ENCODE measurements at regions of chr10 and their contacts with region 1.

Region 1: GRCh38 chr10:6195846-6196245 is 6.9 kb upstream of the PFKFB3 start:
- DNase-seq: no peak
- ATAC-seq: no peak
- H3K4me3 ChIP-seq: no peak overlapping the region
- H3K27ac ChIP-seq: peak overlapping the region; percentile 89 to 98 (median 95)
- H3K4me1 ChIP-seq: peaks cover 76 to 82% of the 10 kb centered on the region in 2 donors
- H3K27me3 ChIP-seq: no peaks in the 10 kb centered on the region
- CTCF ChIP-seq: no peak
- POLR2A ChIP-seq: peak in 1 of 2 donors; percentile 14

Region 2: GRCh38 chr10:5343562-5343961 is 852.3 kb before region 1 on chr10:
- in situ Hi-C with region 1: no loop called
- intact Hi-C with region 1: no loop called
- DNase-seq: no peak
- ATAC-seq: no peak
- H3K4me3 ChIP-seq: no peak overlapping the region
- H3K27ac ChIP-seq: no peak overlapping the region
- H3K4me1 ChIP-seq: no peaks in the 10 kb centered on the region
- H3K27me3 ChIP-seq: no peaks in the 10 kb centered on the region
- CTCF ChIP-seq: no peak
- POLR2A ChIP-seq: no peak

Region 3: DNA sequence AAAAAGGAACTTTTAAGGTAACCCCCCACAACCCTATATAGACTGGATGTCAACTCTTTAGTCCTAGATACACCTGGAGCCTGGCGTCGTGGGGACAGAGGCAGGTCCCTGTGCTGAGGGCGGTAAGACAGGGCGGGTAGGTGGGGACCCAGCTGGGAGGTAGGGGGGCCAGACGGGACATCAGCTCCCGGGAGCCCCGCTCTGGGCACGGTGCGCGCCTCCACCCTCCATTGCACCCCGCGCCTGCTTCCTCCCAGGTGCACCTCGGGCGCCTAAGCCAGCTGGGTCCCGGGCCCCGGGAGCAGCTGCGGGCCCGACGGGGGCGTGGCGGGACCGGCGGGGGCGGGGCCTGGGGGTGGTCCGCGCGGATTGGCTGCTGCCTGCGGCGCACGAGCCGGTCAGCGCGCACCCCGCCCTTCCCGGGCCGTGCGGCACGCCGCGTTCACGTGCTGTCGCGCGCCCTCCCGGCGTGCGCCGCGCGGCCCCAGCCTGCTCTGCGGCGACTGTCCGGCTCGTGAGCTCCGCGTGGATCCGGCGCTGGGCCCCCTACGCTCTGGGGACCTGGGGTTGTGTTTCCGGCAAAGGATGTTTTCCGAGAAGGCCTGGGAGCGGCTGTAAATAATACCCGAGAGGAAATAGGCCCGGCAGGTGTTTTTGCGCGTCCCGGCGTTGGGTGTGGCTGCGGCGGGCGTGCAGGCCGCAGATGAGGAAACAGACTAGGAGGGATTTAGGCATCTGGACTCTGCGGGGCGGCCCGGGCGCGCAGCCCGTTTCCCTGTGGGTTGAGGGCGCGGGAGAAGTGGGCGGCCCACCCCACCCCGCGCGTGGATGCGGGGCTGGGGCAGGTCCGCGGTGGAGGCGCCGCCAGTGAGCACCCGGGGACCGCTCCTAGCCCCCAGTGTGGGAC is 32.2 kb before region 1 on chr10:
- in situ Hi-C with region 1: loop called in 2 of 4 experiments (anchors 5 to 10 kb)
- intact Hi-C with region 1: loop called (anchors 1 kb)
- DNase-seq: peak; percentile 91 to 96
- ATAC-seq: peak; percentile 80 to 86
- H3K4me3 ChIP-seq: peak overlapping the region; percentile 67 to 79 (median 76)
- H3K27ac ChIP-seq: peak overlapping the region; percentile 96 to 99 (median 99)
- H3K4me1 ChIP-seq: peaks cover 38 to 62% of the 10 kb centered on the region in 2 donors
- H3K27me3 ChIP-seq: no peaks in the 10 kb centered on the region
- CTCF ChIP-seq: peak in 2 of 5 experiments; percentile 30 to 31
- POLR2A ChIP-seq: peak; percentile 83 to 90

Region 4: GRCh38 chr10:6175329-6176055 is 20.4 kb before region 1 on chr10:
- in situ Hi-C with region 1: no loop called
- intact Hi-C with region 1: loop called (anchors 2 kb)
- DNase-seq: peak; percentile 90
- ATAC-seq: peak; percentile 33 to 38
- H3K4me3 ChIP-seq: peak overlapping the region in 2 of 4 donors; percentile 17 to 48
- H3K27ac ChIP-seq: peak overlapping the region; percentile 96 to 99 (median 99)
- H3K4me1 ChIP-seq: peaks cover 83 to 87% of the 10 kb centered on the region in 2 donors
- H3K27me3 ChIP-seq: no peaks in the 10 kb centered on the region
- CTCF ChIP-seq: no peak
- POLR2A ChIP-seq: peak; percentile 38 to 64

Measured in gastrocnemius medialis (tissue), 4 donors.